ENCODE measurements at regions of chr2 and their contacts with region 1.

Region 1: GRCh38 chr2:216013080-216013909 is at the start of gene MREG:
- DNase-seq: peak; percentile 90
- ATAC-seq: peak; percentile 82
- H3K4me3 ChIP-seq: peak within 1 kb of the TSS; percentile 47 to 80 (median 69)
- H3K4me3 Mint-ChIP-seq: peak within 1 kb of the TSS; percentile 93
- H3K27ac ChIP-seq: peak within 1 kb of the TSS; percentile 20 to 61
- H3K27ac Mint-ChIP-seq: peak within 1 kb of the TSS; percentile 84
- H3K4me1 ChIP-seq: peaks cover 30 to 41% of the 10 kb centered on the region in 2 donors
- H3K4me1 Mint-ChIP-seq: peaks cover 49% of the 10 kb centered on the region
- H3K27me3 ChIP-seq: no peaks in the 10 kb centered on the region
- H3K27me3 Mint-ChIP-seq: no peaks in the 10 kb centered on the region
- CTCF ChIP-seq: peak; percentile 74
- total RNA-seq, gene MREG: 5.7 and 6.3 TPM in 2 replicates

Region 2: DNA sequence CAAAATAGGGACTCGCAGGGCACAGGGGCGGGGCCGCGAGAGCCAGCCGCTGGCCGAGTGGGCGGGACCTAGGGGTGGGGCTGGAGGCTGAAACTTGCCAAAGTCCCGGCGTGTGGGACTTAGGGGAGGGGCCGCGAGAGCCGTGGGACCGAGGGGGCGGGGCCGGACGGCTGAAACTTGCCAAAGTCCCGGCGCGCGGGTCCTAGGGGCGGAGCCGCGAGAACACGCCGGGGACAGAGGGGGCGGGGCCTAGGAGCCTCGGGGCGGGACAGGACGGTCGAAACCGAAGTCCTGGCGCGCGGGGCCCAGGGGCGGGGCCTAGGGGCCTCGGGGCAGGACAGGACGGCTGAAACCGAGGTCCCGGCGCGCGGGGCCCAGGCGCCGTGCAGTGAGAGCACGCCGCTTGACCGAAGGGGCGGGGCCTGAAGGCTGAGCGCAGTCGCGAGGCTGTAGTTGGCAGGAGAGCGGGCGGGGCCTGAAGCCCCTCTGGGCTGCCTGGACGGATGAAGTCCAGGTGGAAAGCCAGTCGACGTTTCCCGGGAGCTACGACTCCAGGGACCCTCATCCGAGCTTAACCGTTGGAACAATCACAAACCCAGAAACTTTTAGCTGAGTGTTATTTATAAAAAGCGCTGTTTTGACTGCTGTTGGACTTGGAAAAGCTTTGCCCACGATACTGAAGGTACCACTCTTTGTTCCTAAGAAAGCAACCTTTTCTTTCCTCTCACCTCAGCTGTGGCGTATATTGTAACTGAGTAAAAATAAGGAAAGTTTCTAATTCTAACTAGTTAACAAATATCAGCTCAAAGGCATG is 1203.3 kb before region 1 on chr2:
- CTCF ChIA-PET with region 1: no interaction called
- POLR2A ChIA-PET with region 1: no interaction called
- intact Hi-C with region 1: loop called (anchors 10 kb)
- DNase-seq: peak; percentile 99
- ATAC-seq: peak; percentile 88
- H3K4me3 ChIP-seq: peak overlapping the region; percentile 53 to 96 (median 94)
- H3K4me3 Mint-ChIP-seq: peak overlapping the region; percentile 98
- H3K27ac ChIP-seq: peak overlapping the region; percentile 75 to 76
- H3K27ac Mint-ChIP-seq: peak overlapping the region; percentile 98
- H3K4me1 ChIP-seq: peaks cover 13 to 19% of the 10 kb centered on the region in 2 donors
- H3K4me1 Mint-ChIP-seq: peaks cover 40% of the 10 kb centered on the region
- H3K27me3 ChIP-seq: no peaks in the 10 kb centered on the region
- H3K27me3 Mint-ChIP-seq: no peaks in the 10 kb centered on the region
- CTCF ChIP-seq: no peak

Region 3: DNA sequence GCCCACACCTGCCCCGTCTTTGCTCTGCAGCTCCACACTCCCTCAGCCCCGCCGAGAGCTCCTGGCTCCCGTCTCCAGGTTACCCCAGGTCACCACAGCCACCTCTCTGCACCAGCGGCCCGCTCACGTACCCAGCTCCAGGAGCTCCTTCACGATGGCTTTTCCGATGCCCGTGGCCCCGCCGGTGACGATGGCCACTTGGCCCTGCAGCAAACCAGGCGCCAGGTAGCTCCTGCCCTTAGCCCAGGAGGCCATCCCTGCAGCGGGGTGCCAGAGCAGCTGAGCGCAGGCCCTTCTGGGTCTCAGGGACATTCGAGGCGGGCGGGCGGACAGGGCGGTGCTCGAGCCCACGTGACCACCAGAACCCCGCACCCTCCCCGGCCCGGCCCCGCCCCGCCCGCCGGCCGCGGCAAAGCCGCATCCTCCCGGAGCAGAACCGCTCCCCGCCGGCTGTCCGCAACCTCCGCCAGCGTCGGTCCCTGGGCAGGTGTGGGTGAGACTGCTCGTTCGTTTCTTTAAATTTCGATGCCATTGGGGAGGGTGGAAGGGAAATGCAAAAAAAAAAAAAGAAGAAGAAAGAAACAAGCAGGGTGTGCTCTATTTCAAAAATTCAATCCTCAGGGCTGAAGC is 68.3 kb after region 1 on chr2 and contains the starts of genes PECR and TMEM169:
- CTCF ChIA-PET with region 1: no interaction called
- POLR2A ChIA-PET with region 1: interaction called, 3 read pairs
- intact Hi-C with region 1: loop called (anchors 5 kb)
- DNase-seq: peak; percentile 76
- ATAC-seq: peak; percentile 97
- H3K4me3 ChIP-seq: peak within 1 kb of the TSS; percentile 63 to 87 (median 79)
- H3K4me3 Mint-ChIP-seq: peak within 1 kb of the TSS; percentile 91
- H3K27ac ChIP-seq: peak within 1 kb of the TSS; percentile 51 to 68
- H3K27ac Mint-ChIP-seq: peak within 1 kb of the TSS; percentile 80
- H3K4me1 ChIP-seq: peaks cover 40 to 41% of the 10 kb centered on the region in 2 donors
- H3K4me1 Mint-ChIP-seq: peaks cover 45% of the 10 kb centered on the region
- H3K27me3 ChIP-seq: no peaks in the 10 kb centered on the region
- H3K27me3 Mint-ChIP-seq: no peaks in the 10 kb centered on the region
- CTCF ChIP-seq: no peak
- total RNA-seq, gene PECR: 15.6 and 16.5 TPM in 2 replicates
- total RNA-seq, gene TMEM169: 0.84 and 1.2 TPM in 2 replicates

Region 4: DNA sequence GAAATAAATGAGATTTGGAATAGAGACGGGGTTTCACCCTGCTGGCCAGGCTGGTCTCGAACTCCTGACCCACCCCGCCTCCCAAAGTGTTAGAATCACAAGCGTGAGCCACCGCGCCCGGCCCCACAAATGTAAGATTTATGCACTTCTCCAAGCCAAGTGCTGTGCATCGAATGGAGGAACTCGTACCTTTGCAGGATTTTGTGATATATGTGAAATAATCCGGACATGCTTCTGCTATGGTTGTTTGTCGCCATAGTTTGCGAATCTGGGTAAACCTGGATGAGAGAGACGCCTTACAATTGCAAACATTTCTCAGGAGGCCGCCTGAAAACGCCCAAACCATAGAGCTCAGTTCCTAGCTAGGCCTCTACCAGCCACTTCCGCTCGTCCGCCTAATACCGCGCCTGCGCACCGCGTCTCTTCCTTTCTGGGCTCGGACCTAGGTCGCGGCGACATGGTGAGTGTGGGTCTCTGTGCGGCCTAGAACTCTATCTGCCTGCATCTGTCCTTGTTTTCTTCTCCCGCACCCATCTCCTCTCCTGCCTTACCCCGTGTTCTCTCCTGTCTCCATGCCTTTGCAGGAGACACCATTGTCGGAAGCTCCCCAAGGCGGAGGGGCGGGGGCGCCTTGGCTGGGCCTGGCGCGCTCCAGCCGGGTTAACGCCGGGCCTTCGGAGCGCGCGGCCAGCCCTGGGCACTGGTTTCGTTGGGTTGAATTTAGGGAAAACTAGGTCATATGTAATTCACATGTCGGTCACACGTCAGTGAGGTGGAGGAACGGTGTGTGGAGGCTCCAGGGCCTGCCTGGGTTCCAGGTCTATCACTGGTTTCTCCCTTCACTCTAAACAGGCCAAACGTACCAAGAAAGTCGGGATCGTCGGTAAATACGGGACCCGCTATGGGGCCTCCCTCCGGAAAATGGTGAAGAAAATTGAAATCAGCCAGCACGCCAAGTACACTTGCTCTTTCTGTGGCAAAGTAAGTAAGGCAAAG is 485.4 kb after region 1 on chr2 and contains the start of gene RPL37A:
- CTCF ChIA-PET with region 1: no interaction called
- POLR2A ChIA-PET with region 1: no interaction called
- intact Hi-C with region 1: loop called (anchors 10 kb)
- DNase-seq: peak; percentile 94
- ATAC-seq: peak; percentile 97
- H3K4me3 ChIP-seq: peak within 1 kb of the TSS; percentile 65 to 96 (median 92)
- H3K4me3 Mint-ChIP-seq: peak within 1 kb of the TSS; percentile 98
- H3K27ac ChIP-seq: peak within 1 kb of the TSS; percentile 79 to 92
- H3K27ac Mint-ChIP-seq: peak within 1 kb of the TSS; percentile 97
- H3K4me1 ChIP-seq: peaks cover 24 to 25% of the 10 kb centered on the region in 2 donors
- H3K4me1 Mint-ChIP-seq: peaks cover 67% of the 10 kb centered on the region
- H3K27me3 ChIP-seq: no peaks in the 10 kb centered on the region
- H3K27me3 Mint-ChIP-seq: no peaks in the 10 kb centered on the region
- CTCF ChIP-seq: no peak
- total RNA-seq, gene RPL37A: 3,163 and 3,456 TPM in 2 replicates